IMR-90 (cell line): ENCODE measurements at regions of chr1 and their contacts with region 1.

Region 1: GRCh38 chr1:215824245-215824644 is 257.1 kb downstream of the KCTD3 start:
- DNase-seq: peak; percentile 45
- ATAC-seq: peak; percentile 77
- H3K4me3 ChIP-seq: no peak overlapping the region
- H3K27ac ChIP-seq: no peak overlapping the region
- H3K4me1 ChIP-seq: no peaks in the 10 kb centered on the region
- H3K27me3 ChIP-seq: no peaks in the 10 kb centered on the region
- CTCF ChIP-seq: peak; percentile 83
- POLR2A ChIP-seq: no peak
- RAD21 ChIP-seq: peak; percentile 93

Region 2: DNA sequence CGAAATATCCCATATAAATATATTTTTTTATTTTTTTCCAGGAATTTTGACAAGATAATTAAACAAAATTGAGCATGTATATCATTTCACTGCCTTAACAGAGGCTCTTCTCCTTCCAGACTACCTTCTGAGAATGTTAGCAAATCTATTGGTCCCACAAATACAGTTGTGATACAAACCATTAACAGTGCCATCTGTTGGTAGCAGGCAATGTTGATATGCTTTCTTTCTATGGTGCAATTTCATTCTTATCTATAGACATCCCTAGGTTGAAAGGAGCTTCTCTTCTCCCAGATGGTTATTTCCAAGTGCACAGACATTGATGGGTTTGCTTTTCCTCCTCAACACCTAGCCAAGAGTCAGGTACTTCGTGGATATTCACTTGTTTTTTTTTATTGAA is 295.4 kb after region 1 on chr1:
- CTCF ChIA-PET with region 1: no interaction called
- POLR2A ChIA-PET with region 1: no interaction called
- dilution Hi-C with region 1: no loop called
- in situ Hi-C with region 1: no loop called
- intact Hi-C with region 1: loop called (anchors 2 kb)
- DNase-seq: peak; percentile 50
- ATAC-seq: 0 out of 2 replicates have a peak, but pooled peaks have one; percentile 48
- H3K4me3 ChIP-seq: no peak overlapping the region
- H3K27ac ChIP-seq: no peak overlapping the region
- H3K4me1 ChIP-seq: no peaks in the 10 kb centered on the region
- H3K27me3 ChIP-seq: no peaks in the 10 kb centered on the region
- CTCF ChIP-seq: peak; percentile 61
- POLR2A ChIP-seq: no peak
- RAD21 ChIP-seq: peak; percentile 52

Region 3: GRCh38 chr1:216221260-216221700 is 397.0 kb after region 1 on chr1:
- CTCF ChIA-PET with region 1: interaction called, 3 read pairs
- POLR2A ChIA-PET with region 1: no interaction called
- dilution Hi-C with region 1: no loop called
- in situ Hi-C with region 1: no loop called
- intact Hi-C with region 1: loop called (anchors 1 kb)
- DNase-seq: peak; percentile 86
- ATAC-seq: peak; percentile 94
- H3K4me3 ChIP-seq: peak overlapping the region; percentile 76
- H3K27ac ChIP-seq: peak overlapping the region; percentile 82
- H3K4me1 ChIP-seq: peaks cover 4% of the 10 kb centered on the region; the same call in 1 of the 2 replicates
- H3K27me3 ChIP-seq: no peaks in the 10 kb centered on the region
- CTCF ChIP-seq: peak; percentile 83
- POLR2A ChIP-seq: no peak
- RAD21 ChIP-seq: peak; percentile 70

Region 4: GRCh38 chr1:216566641-216567205 is 742.5 kb after region 1 on chr1:
- CTCF ChIA-PET with region 1: no interaction called
- POLR2A ChIA-PET with region 1: no interaction called
- dilution Hi-C with region 1: no loop called
- in situ Hi-C with region 1: no loop called
- intact Hi-C with region 1: loop called (anchors 5 kb)
- DNase-seq: peak; percentile 45
- ATAC-seq: peak; percentile 62
- H3K4me3 ChIP-seq: no peak overlapping the region
- H3K27ac ChIP-seq: no peak overlapping the region
- H3K4me1 ChIP-seq: no peaks in the 10 kb centered on the region
- H3K27me3 ChIP-seq: no peaks in the 10 kb centered on the region
- CTCF ChIP-seq: peak; percentile 56
- POLR2A ChIP-seq: no peak
- RAD21 ChIP-seq: peak; percentile 56

Region 5: GRCh38 chr1:216742625-216743024 is 918.4 kb after region 1 on chr1:
- CTCF ChIA-PET with region 1: no interaction called
- POLR2A ChIA-PET with region 1: no interaction called
- dilution Hi-C with region 1: no loop called
- in situ Hi-C with region 1: loop called (anchors 25 kb)
- intact Hi-C with region 1: loop called (anchors 2 kb)
- DNase-seq: peak; percentile 30
- ATAC-seq: no peak
- H3K4me3 ChIP-seq: no peak overlapping the region
- H3K27ac ChIP-seq: no peak overlapping the region
- H3K4me1 ChIP-seq: no peaks in the 10 kb centered on the region
- H3K27me3 ChIP-seq: no peaks in the 10 kb centered on the region
- CTCF ChIP-seq: peak; percentile 53
- POLR2A ChIP-seq: no peak
- RAD21 ChIP-seq: peak; percentile 36

Region 6: GRCh38 chr1:217660353-217661062 is 1836.3 kb after region 1 on chr1:
- CTCF ChIA-PET with region 1: no interaction called
- POLR2A ChIA-PET with region 1: no interaction called
- dilution Hi-C with region 1: no loop called
- in situ Hi-C with region 1: no loop called
- intact Hi-C with region 1: loop called (anchors 1 kb)
- DNase-seq: peak; percentile 90
- ATAC-seq: peak; percentile 93
- H3K4me3 ChIP-seq: no peak overlapping the region
- H3K27ac ChIP-seq: peak overlapping the region; percentile 74
- H3K4me1 ChIP-seq: peaks cover 5% of the 10 kb centered on the region
- H3K27me3 ChIP-seq: no peaks in the 10 kb centered on the region
- CTCF ChIP-seq: peak; percentile 78
- POLR2A ChIP-seq: no peak
- RAD21 ChIP-seq: peak; percentile 75

Region 7: DNA sequence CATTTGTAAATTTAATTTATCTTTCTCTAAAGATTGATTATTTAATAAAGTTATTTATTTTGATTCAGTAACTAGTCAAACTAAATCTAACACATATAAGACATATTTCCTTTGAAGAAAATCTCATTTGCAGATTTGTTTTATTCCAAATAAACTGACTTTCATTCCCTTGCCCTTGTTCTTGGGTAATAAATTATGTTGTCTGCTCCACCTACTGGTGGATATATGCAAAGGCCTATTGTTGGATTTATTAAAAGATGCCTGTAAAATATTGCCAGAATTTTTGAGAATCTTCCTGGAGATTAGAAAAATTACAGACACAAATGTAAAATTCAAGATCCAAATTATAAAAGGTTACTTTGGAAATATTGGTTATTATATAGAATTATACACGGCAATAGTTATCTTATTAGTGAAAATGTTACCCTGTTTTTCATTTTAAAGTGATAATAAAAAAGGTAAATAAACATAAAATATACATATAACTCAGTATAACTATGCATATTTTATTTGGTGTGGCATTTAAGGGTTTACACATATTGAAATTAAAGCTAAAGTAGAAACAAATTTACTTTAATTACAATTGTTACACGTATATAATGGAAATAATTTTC is 1923.0 kb after region 1 on chr1:
- CTCF ChIA-PET with region 1: no interaction called
- POLR2A ChIA-PET with region 1: no interaction called
- dilution Hi-C with region 1: no loop called
- in situ Hi-C with region 1: no loop called
- intact Hi-C with region 1: loop called (anchors 5 kb)
- DNase-seq: peak; percentile 41
- ATAC-seq: peak; percentile 40; the same call in 1 of the 2 replicates
- H3K4me3 ChIP-seq: no peak overlapping the region
- H3K27ac ChIP-seq: no peak overlapping the region
- H3K4me1 ChIP-seq: no peaks in the 10 kb centered on the region
- H3K27me3 ChIP-seq: no peaks in the 10 kb centered on the region
- CTCF ChIP-seq: peak; percentile 77
- POLR2A ChIP-seq: no peak
- RAD21 ChIP-seq: peak; percentile 57